Activated CD4-positive, alpha-beta T cell treated with anti-CD3 and anti-CD28 coated beads for 36 hours (primary cell): ENCODE measurements at regions of chr2 and their contacts with region 1.

Region 1: GRCh38 chr2:10448208-10448645 is at the start of gene ODC1:
- DNase-seq: peak; percentile 97
- ATAC-seq: peak; percentile 74
- H3K4me3 Mint-ChIP-seq: peak within 1 kb of the TSS; percentile 85
- H3K27ac Mint-ChIP-seq: peak within 1 kb of the TSS; percentile 95
- H3K4me1 Mint-ChIP-seq: peaks cover 51% of the 10 kb centered on the region
- H3K27me3 Mint-ChIP-seq: no peaks in the 10 kb centered on the region
- total RNA-seq, gene ODC1: 158 to 170 TPM

Region 2: GRCh38 chr2:9555297-9556141 is 892.7 kb before region 1 on chr2 and contains the start of gene ADAM17:
- CTCF ChIA-PET with region 1: no interaction called
- POLR2A ChIA-PET with region 1: interaction called, 3 read pairs
- intact Hi-C with region 1: loop called in 1 of 2 experiments (anchors 5 kb)
- DNase-seq: peak; percentile 92
- ATAC-seq: peak; percentile 87
- H3K4me3 Mint-ChIP-seq: peak within 1 kb of the TSS; percentile 97
- H3K27ac Mint-ChIP-seq: peak within 1 kb of the TSS; percentile 95
- H3K4me1 Mint-ChIP-seq: peaks cover 50% of the 10 kb centered on the region
- H3K27me3 Mint-ChIP-seq: no peaks in the 10 kb centered on the region
- total RNA-seq, gene ADAM17: 20.2 to 23.1 TPM

Region 3: GRCh38 chr2:9975805-9976447 is 472.3 kb before region 1 on chr2:
- CTCF ChIA-PET with region 1: no interaction called
- POLR2A ChIA-PET with region 1: no interaction called
- intact Hi-C with region 1: loop called in 1 of 2 experiments (anchors 5 kb)
- DNase-seq: peak; percentile 66
- ATAC-seq: peak; percentile 87
- H3K4me3 Mint-ChIP-seq: no peak overlapping the region
- H3K27ac Mint-ChIP-seq: peak overlapping the region; percentile 34
- H3K4me1 Mint-ChIP-seq: peaks cover 57% of the 10 kb centered on the region
- H3K27me3 Mint-ChIP-seq: peaks cover 10% of the 10 kb centered on the region

Region 4: DNA sequence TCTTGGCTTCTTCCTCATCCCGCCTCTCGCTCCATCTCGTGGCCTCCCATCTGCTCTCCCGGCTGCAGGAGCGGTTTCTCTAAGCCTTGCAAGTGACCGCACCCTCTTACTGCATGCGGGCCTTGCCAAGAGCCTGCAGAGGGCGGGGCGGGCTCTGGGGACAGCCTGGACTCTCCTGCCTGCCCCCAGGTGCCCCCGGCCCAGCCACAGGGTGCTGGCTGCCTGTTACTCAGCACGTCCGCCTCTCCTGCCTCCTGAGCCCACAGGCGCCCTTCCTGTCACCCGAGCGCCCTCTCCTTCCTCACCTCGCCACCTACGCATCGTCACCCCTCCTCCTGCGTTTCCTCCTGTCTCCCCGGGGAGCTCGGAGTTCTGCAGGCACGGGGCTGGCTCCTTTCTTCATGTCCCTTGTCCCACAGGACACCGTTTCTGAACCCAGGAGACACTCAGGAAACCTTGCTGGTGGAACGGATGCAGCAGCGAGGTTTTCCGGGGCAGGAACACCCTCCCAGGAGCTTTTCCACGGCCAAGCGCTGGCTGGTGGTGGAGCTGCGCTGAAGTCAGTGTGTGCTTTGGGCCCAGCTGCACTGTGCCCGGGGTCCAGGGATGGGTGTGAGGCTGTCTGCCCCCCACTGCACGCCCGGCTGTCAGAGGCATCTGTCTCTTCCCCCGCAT is 117.1 kb before region 1 on chr2:
- CTCF ChIA-PET with region 1: interaction called, 3 read pairs
- POLR2A ChIA-PET with region 1: interaction called, 11 read pairs
- intact Hi-C with region 1: loop called in 1 of 2 experiments (anchors 1 kb)
- DNase-seq: peak; percentile 93
- ATAC-seq: peak; percentile 58
- H3K4me3 Mint-ChIP-seq: peak overlapping the region; percentile 91
- H3K27ac Mint-ChIP-seq: peak overlapping the region; percentile 92
- H3K4me1 Mint-ChIP-seq: peaks cover 81% of the 10 kb centered on the region
- H3K27me3 Mint-ChIP-seq: no peaks in the 10 kb centered on the region

Region 5: GRCh38 chr2:10514743-10515142 is 66.5 kb after region 1 on chr2:
- CTCF ChIA-PET with region 1: no interaction called
- POLR2A ChIA-PET with region 1: no interaction called
- intact Hi-C with region 1: no loop called
- DNase-seq: no peak
- ATAC-seq: no peak
- H3K4me3 Mint-ChIP-seq: no peak overlapping the region
- H3K27ac Mint-ChIP-seq: no peak overlapping the region
- H3K4me1 Mint-ChIP-seq: no peaks in the 10 kb centered on the region
- H3K27me3 Mint-ChIP-seq: no peaks in the 10 kb centered on the region

Region 6: GRCh38 chr2:10654069-10654468 is 205.8 kb after region 1 on chr2:
- CTCF ChIA-PET with region 1: no interaction called
- POLR2A ChIA-PET with region 1: interaction called, 3 read pairs
- intact Hi-C with region 1: loop called (anchors 1 kb)
- DNase-seq: peak; percentile 81
- ATAC-seq: peak; percentile 97
- H3K4me3 Mint-ChIP-seq: peak overlapping the region; percentile 9
- H3K27ac Mint-ChIP-seq: peak overlapping the region; percentile 89
- H3K4me1 Mint-ChIP-seq: peaks cover 47% of the 10 kb centered on the region
- H3K27me3 Mint-ChIP-seq: no peaks in the 10 kb centered on the region

Region 7: DNA sequence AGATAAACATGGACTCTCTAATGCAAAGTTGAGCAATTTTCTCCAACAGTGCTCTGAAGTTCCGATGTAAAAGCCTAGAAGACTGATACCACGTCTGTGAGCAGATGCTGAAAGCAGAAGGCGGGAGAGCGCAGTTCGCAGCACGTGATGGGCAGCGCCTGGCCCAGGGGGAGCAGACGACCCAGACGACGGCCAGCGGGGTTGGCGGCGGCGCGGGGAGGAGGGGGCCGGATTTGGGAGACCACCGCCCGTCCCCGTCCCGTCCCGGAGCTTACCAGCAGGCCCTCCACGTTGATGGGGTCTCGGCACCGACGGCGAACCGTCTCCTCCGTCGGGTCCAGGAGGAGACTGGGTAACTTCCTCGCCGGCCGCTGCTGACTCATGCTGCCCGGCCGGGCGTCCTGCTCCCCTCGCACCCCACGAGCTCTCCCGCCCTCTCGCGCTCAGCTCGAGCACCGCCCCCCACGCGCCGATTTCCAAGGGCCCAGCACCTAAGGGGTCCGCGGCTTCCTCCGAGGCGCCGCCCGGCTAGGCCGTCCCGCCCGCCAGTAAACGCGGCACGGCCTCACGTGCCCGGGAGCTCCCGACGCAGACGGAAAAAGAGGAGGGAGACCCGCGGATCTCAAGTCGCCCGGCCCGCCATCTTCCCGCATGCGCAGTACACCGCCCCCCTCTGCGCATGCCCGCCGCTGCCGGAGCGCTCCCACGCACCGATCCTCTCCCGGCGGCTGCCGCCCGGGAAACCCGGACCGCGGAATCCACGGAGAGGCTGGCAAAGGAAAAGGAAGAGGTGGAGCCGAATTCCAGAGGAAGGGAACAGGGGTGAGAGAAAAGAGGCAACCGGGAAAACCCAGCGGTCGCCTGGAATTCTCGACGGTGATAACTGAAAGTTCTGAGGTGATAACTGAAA is 1017.5 kb after region 1 on chr2 and contains the start of gene E2F6:
- CTCF ChIA-PET with region 1: no interaction called
- POLR2A ChIA-PET with region 1: no interaction called
- intact Hi-C with region 1: loop called in 1 of 2 experiments (anchors 5 kb)
- DNase-seq: peak; percentile 92
- ATAC-seq: peak; percentile 85
- H3K4me3 Mint-ChIP-seq: peak within 1 kb of the TSS; percentile 81
- H3K27ac Mint-ChIP-seq: peak within 1 kb of the TSS; percentile 92
- H3K4me1 Mint-ChIP-seq: peaks cover 33% of the 10 kb centered on the region
- H3K27me3 Mint-ChIP-seq: no peaks in the 10 kb centered on the region
- total RNA-seq, gene E2F6: 7.2 to 10.6 TPM